ENCODE measurements at regions of chr16 and their contacts with region 1.

Region 1: GRCh38 chr16:11560701-11561449 is 25.8 kb downstream of the LITAF start:
- DNase-seq: peak; percentile 77
- H3K4me3 Mint-ChIP-seq: peak overlapping the region; percentile 73
- H3K27ac Mint-ChIP-seq: peak overlapping the region; percentile 91
- H3K4me1 Mint-ChIP-seq: peaks cover 78% of the 10 kb centered on the region
- H3K27me3 Mint-ChIP-seq: no peaks in the 10 kb centered on the region

Region 2: DNA sequence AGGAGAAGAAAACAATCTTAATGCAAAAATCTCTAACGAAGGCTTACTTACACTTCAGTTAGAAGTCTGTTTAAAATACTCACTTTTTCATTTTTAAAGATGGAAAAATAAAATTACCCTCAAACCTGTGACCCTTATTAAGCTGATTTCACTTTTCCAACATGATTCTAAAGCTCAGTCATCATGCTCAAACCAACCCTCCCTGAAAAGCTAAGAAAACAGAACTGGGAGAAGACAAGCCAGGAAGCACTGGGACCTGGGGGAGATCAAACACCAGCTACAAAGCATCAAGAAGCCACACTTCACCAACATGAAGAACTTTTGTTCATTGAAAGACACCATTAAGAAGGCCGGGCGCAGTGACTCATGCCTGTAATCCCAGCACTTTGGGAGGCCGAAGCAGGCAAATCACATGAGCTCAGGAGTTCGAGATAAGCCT is 63.0 kb before region 1 on chr16:
- CTCF ChIA-PET with region 1: no interaction called
- POLR2A ChIA-PET with region 1: no interaction called
- intact Hi-C with region 1: no loop called
- DNase-seq: no peak
- H3K4me3 Mint-ChIP-seq: no peak overlapping the region
- H3K27ac Mint-ChIP-seq: no peak overlapping the region
- H3K4me1 Mint-ChIP-seq: peaks cover 20% of the 10 kb centered on the region
- H3K27me3 Mint-ChIP-seq: no peaks in the 10 kb centered on the region

Region 3: DNA sequence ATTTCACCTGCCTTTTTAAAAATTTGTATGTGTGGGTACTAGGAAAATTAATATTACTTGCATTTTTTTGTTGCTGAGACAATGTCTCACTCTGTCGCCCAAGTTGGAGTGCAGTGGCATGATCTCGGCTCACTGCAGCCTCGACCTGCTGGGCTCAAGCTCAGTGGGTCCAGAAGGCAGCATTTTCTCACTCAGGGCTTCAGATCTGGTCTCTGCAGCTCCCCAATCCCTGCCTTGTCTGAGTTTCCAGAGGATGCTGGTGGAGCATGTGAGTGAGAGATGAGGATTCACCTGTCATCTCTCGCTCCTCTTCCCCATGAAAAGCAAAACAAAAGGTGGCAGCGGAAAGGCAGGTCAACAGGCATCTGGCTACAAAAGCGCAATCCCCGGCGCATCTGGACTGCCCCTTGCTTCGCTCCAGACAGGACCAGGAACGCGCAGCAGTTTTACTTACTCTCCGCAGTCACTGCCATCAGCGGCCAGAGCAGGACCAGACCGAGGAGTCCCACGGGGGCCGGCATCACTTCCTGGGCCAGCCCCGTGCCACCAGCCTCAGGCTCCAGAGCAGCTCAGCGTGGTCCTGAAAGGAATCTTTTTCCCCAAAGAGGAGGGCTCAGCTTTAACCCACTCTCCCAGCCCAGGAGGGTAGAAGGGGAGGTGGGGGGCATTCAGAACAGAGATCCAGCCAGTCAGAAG is 34.1 kb before region 1 on chr16:
- CTCF ChIA-PET with region 1: interaction called, 11 read pairs
- POLR2A ChIA-PET with region 1: no interaction called
- intact Hi-C with region 1: no loop called
- DNase-seq: no peak
- H3K4me3 Mint-ChIP-seq: no peak overlapping the region
- H3K27ac Mint-ChIP-seq: no peak overlapping the region
- H3K4me1 Mint-ChIP-seq: no peaks in the 10 kb centered on the region
- H3K27me3 Mint-ChIP-seq: no peaks in the 10 kb centered on the region

Region 4: DNA sequence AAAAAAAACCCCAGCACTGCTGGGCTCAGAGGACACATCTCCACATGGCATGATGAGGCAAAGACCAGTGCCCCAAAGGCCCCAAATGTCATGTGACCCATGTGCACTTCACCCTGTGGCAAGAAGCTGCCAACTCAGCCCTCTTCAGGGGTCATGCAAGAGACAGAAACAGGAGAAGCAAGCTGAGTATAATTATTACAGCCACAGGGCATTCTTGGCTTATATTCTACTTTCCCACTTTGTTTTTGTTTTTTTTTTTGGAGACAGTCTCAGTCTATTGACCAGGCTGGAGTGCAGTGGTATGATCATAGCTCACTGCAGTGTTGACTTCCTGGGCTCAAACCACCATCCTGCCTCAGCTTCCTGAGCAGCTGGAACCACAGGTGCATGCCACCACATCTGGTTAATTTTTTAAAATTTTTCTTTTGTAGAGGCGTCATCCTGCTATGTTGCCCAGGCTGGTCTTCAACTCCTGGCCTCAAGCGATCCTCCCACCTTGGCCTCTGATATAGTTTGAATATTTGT is 58.5 kb after region 1 on chr16:
- CTCF ChIA-PET with region 1: no interaction called
- POLR2A ChIA-PET with region 1: no interaction called
- intact Hi-C with region 1: loop called (anchors 2 kb)
- DNase-seq: peak; percentile 59
- H3K4me3 Mint-ChIP-seq: no peak overlapping the region
- H3K27ac Mint-ChIP-seq: peak overlapping the region; percentile 78
- H3K4me1 Mint-ChIP-seq: peaks cover 38% of the 10 kb centered on the region
- H3K27me3 Mint-ChIP-seq: no peaks in the 10 kb centered on the region